Activated CD4-positive, alpha-beta memory T cell treated with anti-CD3 and anti-CD28 coated beads for 36 hours (primary cell): ENCODE measurements at regions of chr11 and their contacts with region 1.

Region 1: GRCh38 chr11:118145285-118146227 is 7.1 kb downstream of the SCN4B start:
- DNase-seq: peak; percentile 95
- H3K4me3 Mint-ChIP-seq: peak overlapping the region; percentile 78
- H3K27ac Mint-ChIP-seq: no peak overlapping the region
- H3K4me1 Mint-ChIP-seq: peaks cover 3% of the 10 kb centered on the region
- H3K27me3 Mint-ChIP-seq: peaks cover 39% of the 10 kb centered on the region

Region 2: DNA sequence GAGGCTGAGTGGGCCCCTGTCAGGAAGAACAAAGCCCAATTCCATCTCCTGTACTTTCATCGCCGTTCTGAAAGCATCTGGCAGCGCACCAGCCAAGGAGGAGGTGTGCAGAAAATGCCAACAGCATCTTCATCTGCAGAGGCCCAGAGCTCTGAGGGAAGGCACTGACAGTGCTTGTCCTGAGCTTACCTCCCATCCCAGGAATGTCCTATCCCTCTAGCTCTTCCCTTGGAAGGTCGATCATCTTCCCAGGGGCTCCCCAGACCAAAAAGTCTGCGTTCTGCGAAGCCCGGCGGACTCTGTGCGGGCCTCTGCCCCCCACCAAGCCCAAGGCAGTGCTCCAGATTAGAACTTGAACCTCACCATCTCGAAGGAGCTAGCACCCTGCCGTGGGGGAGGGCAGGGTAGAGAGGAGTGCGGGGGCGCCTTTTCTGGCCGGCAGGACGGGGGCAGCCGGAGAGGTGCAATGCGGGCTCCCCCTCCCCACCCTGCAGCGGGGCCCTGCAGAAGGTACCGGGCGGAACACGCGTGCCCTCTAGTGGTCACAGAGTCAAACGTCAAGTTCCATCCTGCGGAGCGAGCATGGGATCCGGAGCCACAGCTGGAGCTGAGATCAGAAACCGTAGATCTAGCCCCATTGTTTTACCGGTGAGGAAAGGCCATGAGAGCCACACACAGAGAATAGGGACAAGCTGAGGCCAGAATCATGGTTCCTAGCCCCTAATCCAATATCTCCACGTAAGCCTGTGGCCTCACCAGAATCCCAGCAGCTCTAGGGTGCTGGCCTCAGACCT is 25.9 kb after region 1 on chr11:
- CTCF ChIA-PET with region 1: interaction called, 101 read pairs
- POLR2A ChIA-PET with region 1: interaction called, 5 read pairs
- intact Hi-C with region 1: loop called (anchors 1 kb)
- DNase-seq: peak; percentile 81
- H3K4me3 Mint-ChIP-seq: no peak overlapping the region
- H3K27ac Mint-ChIP-seq: no peak overlapping the region
- H3K4me1 Mint-ChIP-seq: no peaks in the 10 kb centered on the region
- H3K27me3 Mint-ChIP-seq: peaks cover 9% of the 10 kb centered on the region

Region 3: GRCh38 chr11:118290923-118291322 is 145.4 kb after region 1 on chr11:
- CTCF ChIA-PET with region 1: interaction called, 20 read pairs
- POLR2A ChIA-PET with region 1: no interaction called
- intact Hi-C with region 1: loop called (anchors 1 kb)
- DNase-seq: peak; percentile 61
- H3K4me3 Mint-ChIP-seq: no peak overlapping the region
- H3K27ac Mint-ChIP-seq: peak overlapping the region; percentile 23
- H3K4me1 Mint-ChIP-seq: peaks cover 14% of the 10 kb centered on the region
- H3K27me3 Mint-ChIP-seq: no peaks in the 10 kb centered on the region

Region 4: DNA sequence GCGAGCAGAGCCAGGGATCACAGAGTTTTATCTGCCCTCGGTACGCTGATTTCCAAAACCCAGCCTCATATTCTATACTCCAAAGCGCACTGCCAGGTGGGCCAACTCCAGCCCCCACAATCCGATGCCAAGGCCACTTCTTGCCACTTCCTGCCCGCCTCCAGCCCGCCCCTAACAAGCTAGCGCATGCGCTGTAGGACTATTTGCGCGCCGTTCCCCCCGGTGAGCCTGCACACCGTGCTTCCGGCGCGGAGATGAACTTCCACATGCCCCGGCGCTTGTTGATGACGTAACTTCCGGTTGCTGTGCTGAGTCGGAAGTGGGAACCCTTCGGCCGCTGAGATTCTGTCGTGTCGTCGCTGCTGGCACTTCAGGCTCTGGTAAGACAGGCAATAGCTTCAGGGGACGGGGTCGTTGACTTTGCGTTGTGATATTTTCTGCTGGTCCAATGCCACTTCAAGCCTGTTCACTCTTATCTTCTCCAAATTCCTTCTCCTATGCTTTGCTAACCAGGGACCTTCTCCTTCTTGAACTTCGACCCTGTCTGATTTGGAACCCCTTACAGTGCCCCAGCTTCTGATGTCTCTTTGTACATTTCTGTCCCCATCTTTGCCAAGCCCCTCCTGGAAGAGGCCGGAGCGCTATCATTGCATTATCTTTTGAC is 213.9 kb after region 1 on chr11 and contains the start of gene UBE4A:
- CTCF ChIA-PET with region 1: interaction called, 3 read pairs
- POLR2A ChIA-PET with region 1: no interaction called
- intact Hi-C with region 1: loop called (anchors 2 kb)
- DNase-seq: peak; percentile 99
- H3K4me3 Mint-ChIP-seq: peak within 1 kb of the TSS; percentile 96
- H3K27ac Mint-ChIP-seq: peak within 1 kb of the TSS; percentile 93
- H3K4me1 Mint-ChIP-seq: peaks cover 45% of the 10 kb centered on the region
- H3K27me3 Mint-ChIP-seq: peaks cover 2% of the 10 kb centered on the region
- total RNA-seq, gene UBE4A: 39.1 to 40.4 TPM

Region 5: GRCh38 chr11:118565051-118565450 is 419.5 kb after region 1 on chr11:
- CTCF ChIA-PET with region 1: no interaction called
- POLR2A ChIA-PET with region 1: no interaction called
- intact Hi-C with region 1: loop called (anchors 1 kb)
- DNase-seq: no peak
- H3K4me3 Mint-ChIP-seq: peak overlapping the region; percentile 67
- H3K27ac Mint-ChIP-seq: no peak overlapping the region
- H3K4me1 Mint-ChIP-seq: peaks cover 7% of the 10 kb centered on the region
- H3K27me3 Mint-ChIP-seq: no peaks in the 10 kb centered on the region